GM13976 (cell line): ENCODE measurements at regions of chr5 and their contacts with region 1.

Region 1: DNA sequence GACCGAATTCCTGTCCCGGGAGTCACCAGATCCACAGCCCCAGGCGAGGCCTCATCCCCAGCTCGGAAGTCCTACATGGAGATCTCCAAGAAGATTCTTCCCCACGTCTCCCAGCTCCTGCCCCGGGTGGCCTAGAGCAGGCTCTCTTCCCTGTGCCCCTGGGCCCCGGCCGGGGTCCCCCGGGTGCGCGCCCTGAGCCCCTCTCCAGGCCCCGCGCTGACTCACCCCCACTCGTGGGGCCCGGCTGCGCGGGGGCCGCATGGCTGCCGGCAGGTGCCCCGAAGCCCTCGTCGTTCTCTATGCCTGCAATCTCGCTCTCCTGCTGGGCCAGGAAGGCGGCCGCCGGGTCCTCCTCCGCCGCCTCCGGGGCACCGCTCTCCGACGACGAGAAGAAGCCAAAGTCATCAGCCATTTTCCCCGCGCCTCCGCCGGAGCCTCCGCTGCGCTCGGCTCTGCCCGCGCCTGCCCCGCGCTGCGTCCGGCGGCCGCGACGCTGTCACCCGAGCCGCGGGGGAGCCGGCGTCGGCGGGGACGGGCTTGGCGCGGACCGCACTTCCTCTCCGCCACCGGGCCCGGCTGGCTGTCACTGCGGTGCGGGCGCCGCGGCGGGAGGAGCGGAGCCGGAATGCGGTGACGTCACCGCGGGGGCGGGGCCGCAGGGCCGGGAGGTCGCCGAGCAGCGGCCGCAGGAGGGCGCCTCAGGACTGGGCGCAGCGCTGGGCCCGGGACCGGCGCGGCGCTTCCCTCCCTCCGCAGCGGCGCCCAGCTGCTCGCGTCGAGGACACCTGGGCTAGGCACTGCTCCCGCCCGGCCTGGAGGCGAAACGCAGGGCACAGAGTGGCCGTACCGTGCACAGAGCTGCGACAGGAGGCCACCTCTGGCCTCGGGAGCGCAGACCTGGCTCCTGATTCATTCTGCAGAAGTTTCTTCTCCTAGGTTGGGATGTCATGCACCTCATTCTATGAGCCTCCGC is at the start of gene CLTB:
- DNase-seq: peak; percentile 96
- CTCF ChIP-seq: peak; percentile 97

Region 2: GRCh38 chr5:176529741-176530141 is 113.5 kb after region 1 on chr5:
- in situ Hi-C with region 1: no loop called
- DNase-seq: no peak
- CTCF ChIP-seq: no peak

Region 3: DNA sequence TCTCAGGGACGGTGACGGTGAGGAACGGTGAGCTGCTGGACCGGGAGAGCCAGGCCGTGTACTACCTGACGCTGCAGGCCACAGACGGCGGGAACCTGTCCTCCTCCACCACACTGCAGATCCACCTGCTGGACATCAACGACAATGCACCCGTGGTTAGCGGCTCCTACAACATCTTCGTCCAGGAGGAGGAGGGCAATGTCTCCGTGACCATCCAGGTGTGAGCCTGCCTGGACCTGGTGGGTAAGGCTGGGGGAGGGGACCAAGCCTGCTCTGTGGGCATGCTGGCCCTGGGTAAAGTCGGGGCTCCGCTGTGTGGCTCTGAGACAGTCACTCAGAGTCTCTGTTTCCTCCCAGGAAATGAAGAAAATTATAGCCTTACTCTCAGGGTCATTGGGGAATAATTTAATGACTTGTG is 162.2 kb after region 1 on chr5:
- in situ Hi-C with region 1: loop called (anchors 25 kb)
- DNase-seq: peak; percentile 73
- CTCF ChIP-seq: peak; percentile 18